ENCODE measurements at regions of chr14 and their contacts with region 1.

Region 1: DNA sequence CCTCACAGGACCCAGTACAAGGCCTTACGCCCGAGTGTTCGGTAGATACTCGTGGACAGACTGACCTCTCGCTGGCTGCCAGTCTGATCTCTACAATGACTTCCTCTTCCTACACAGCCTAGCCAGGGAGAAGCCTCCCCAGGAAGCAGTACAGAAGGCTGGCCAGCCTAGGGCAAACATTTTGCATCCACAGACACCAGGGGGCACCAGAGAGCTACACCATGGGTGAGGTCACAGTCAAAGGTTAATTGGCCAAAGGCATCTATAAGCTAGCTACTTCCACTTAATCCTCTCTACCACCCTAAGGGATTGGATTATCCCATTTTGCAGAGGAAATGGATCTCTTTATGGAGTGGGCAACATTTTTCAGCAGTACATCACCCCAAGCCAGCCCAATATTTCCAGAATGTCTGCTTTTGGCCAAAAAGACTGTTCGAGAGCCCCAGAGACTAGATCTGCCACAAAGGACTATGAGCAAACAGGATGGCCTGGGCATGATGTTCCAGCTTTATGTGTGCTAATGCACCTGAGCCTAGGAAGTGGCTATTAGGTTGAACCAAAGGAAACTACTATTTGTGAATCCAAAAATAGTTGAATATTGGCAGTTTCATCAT is 14.6 kb upstream of the PNMA1 start:
- DNase-seq: peak; percentile 88
- ATAC-seq: peak; percentile 73

Region 2: DNA sequence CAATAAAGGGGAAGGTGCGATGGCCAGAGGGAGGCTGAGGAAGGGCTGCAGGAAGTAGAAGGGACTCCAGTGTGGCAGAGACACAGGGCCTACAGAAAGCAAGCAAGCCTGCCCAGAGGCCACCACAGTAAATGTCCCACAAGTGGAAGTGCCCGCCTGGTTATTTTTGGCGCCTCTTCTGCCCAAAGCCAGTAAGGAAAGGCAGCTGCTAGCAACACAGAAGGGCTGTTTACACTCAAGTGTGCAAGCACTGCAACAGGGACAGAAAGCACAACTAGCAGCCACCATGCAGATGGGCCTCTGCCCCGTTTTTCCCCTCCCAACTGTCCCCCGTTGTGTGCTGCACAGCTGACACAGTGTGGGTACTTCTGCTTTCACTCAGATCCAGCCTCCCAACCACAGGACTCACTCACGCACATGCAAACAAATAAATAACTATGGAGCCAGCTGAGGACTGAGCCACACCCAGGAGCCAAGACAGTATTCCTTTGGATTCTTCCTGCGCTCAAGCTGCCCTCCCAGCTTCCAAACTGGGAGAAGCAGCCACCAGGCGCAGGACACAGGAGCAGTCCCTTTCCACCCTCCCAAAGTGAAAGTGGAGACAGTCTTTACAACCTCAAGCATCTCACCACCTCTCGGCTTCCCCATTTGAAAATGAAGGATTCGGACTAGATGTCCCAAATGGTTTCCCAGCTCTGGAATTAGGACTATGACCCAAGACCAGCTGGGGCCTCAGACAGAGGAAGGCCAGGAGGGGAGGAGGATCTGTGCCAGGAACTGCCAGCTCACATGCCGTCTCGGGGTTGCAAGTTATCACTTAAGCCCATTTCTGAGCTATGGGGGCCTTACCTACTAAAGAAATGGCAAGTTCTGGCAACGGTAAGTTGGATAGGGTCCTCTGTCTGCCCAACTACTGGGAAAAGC is 25.4 kb after region 1 on chr14:
- intact Hi-C with region 1: loop called (anchors 2 kb)
- DNase-seq: peak; percentile 76
- ATAC-seq: peak; percentile 24

Region 3: DNA sequence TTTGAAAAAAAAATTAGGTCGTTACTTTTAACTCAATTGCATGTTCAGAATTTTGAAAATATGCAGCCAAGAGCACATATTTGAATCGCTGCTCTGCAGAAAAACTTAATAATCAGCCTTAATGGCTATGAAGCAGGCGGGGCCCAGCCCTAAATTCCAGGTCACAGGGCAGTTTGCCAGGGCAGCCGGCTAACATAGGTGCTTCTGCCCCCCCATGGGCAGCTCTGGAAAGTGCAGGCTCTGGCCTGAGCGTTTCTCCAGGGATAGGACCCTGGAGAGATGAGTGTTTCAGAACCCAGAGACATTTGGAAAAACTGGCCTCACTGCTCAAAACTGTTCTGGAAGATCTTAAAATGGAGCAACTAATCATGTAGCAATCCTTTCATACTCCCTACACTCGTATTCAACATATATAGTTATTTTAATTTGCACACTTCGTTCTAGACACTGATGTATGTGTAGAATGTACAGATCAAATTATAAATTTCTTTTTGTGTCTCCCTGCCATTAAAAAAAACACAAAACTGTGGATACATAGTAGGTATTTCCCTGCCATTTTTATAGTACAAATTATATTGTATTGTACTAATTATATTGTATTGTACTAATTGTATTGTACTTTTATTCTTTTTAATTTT is 96.8 kb after region 1 on chr14:
- intact Hi-C with region 1: loop called (anchors 1 kb)
- DNase-seq: peak; percentile 97
- ATAC-seq: peak; percentile 95

Region 4: GRCh38 chr14:73886449-73887317 is 157.9 kb after region 1 on chr14 and contains the start of gene ZNF410:
- intact Hi-C with region 1: loop called (anchors 5 kb)
- DNase-seq: peak; percentile 98
- ATAC-seq: peak; percentile 100
- total RNA-seq, gene ZNF410: 16.0 TPM

Measured in Right ventricle myocardium inferior (tissue), 1 donor.